ENCODE measurements at regions of chr16 and their contacts with region 1.

Region 1: GRCh38 chr16:391885-392335 is 5.1 kb upstream of the NME4 start:
- DNase-seq: peak; percentile 83 to 97
- H3K4me3 ChIP-seq: no peak overlapping the region
- H3K27ac ChIP-seq: no peak overlapping the region
- H3K4me1 ChIP-seq: peaks cover 0 to 7% (median 2%) of the 10 kb centered on the region in 4 experiments; a peak in 3 of 7 replicates
- H3K27me3 ChIP-seq: no peaks in the 10 kb centered on the region
- CTCF ChIP-seq: peak; percentile 94 to 100 (median 99)
- EP300 ChIP-seq: no peak
- POLR2A ChIP-seq: no peak
- RAD21 ChIP-seq: peak; percentile 99

Region 2: GRCh38 chr16:354879-355461 is 36.9 kb before region 1 on chr16:
- CTCF ChIA-PET with region 1: no interaction called
- POLR2A ChIA-PET with region 1: no interaction called
- DNase-seq: no peak
- H3K4me3 ChIP-seq: no peak overlapping the region
- H3K27ac ChIP-seq: no peak overlapping the region
- H3K4me1 ChIP-seq: peaks cover 0 to 4% (median 2%) of the 10 kb centered on the region in 4 experiments; a peak in 3 of 7 replicates
- H3K27me3 ChIP-seq: no peaks in the 10 kb centered on the region
- CTCF ChIP-seq: no peak
- EP300 ChIP-seq: no peak
- POLR2A ChIP-seq: no peak
- RAD21 ChIP-seq: no peak

Region 3: GRCh38 chr16:466651-467050 is 74.7 kb after region 1 on chr16:
- CTCF ChIA-PET with region 1: interaction called, 12 read pairs
- POLR2A ChIA-PET with region 1: interaction called, 3 read pairs
- DNase-seq: no peak
- H3K4me3 ChIP-seq: no peak overlapping the region
- H3K27ac ChIP-seq: no peak overlapping the region
- H3K4me1 ChIP-seq: peaks cover 3 to 11% (median 7%) of the 10 kb centered on the region in 4 experiments
- H3K27me3 ChIP-seq: no peaks in the 10 kb centered on the region
- CTCF ChIP-seq: no peak
- EP300 ChIP-seq: no peak
- POLR2A ChIP-seq: no peak
- RAD21 ChIP-seq: no peak

Measured in H1 (cell line).